ENCODE measurements at regions of chr2 and their contacts with region 1.

Region 1: GRCh38 chr2:158184556-158185343 is 83.1 kb downstream of the UPP2 start:
- DNase-seq: peak; percentile 86 to 87
- H3K4me3 ChIP-seq: no peak overlapping the region
- H3K4me3 Mint-ChIP-seq: no peak overlapping the region
- H3K27ac Mint-ChIP-seq: peak overlapping the region; percentile 31
- H3K4me1 ChIP-seq: peaks cover 38% of the 10 kb centered on the region
- H3K4me1 Mint-ChIP-seq: peaks cover 37% of the 10 kb centered on the region
- H3K27me3 ChIP-seq: no peaks in the 10 kb centered on the region
- H3K27me3 Mint-ChIP-seq: no peaks in the 10 kb centered on the region
- CTCF ChIP-seq: no peak

Region 2: GRCh38 chr2:158034199-158034866 is 150.4 kb before region 1 on chr2:
- CTCF ChIA-PET with region 1: no interaction called
- POLR2A ChIA-PET with region 1: no interaction called
- intact Hi-C with region 1: loop called (anchors 1 kb)
- DNase-seq: peak; percentile 69 to 75
- H3K4me3 ChIP-seq: no peak overlapping the region
- H3K4me3 Mint-ChIP-seq: no peak overlapping the region
- H3K27ac Mint-ChIP-seq: no peak overlapping the region
- H3K4me1 ChIP-seq: no peaks in the 10 kb centered on the region
- H3K4me1 Mint-ChIP-seq: peaks cover 9% of the 10 kb centered on the region
- H3K27me3 ChIP-seq: no peaks in the 10 kb centered on the region
- H3K27me3 Mint-ChIP-seq: peaks cover 7% of the 10 kb centered on the region
- CTCF ChIP-seq: peak; percentile 71 to 74

Region 3: DNA sequence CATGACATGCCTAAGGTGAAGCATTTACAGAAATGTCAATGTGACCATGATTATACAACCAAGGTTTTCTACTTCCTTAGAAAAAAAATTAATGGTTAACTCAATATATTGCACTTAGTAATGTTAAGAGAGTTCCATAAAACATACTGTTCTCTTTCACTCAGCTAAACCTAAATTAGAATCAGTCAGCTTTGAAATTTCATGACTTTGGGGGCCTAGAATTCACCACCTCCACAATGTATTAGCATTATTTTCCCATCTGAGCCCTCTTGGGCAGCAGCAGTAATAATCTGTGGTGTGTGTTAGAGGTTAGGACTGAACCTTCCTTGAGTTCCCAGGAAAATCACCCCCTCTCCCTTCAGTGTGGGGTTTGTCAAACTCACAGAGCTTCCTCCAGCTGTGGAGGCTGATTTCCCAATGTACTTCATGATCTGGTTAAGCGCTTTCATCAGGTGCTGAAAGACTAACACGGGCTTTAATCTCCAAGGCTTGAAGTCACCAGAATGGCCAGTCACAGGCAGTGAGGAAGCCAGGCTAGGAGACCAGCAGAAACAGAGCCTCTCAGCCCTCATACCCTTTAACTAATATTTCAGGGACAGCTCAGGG is 90.2 kb before region 1 on chr2:
- CTCF ChIA-PET with region 1: no interaction called
- POLR2A ChIA-PET with region 1: no interaction called
- intact Hi-C with region 1: loop called (anchors 1 kb)
- DNase-seq: peak in 1 of 2 experiments; percentile 12
- H3K4me3 ChIP-seq: no peak overlapping the region
- H3K4me3 Mint-ChIP-seq: no peak overlapping the region
- H3K27ac Mint-ChIP-seq: no peak overlapping the region
- H3K4me1 ChIP-seq: peaks cover 9% of the 10 kb centered on the region; the same call in 1 of the 2 replicates
- H3K4me1 Mint-ChIP-seq: no peaks in the 10 kb centered on the region
- H3K27me3 ChIP-seq: no peaks in the 10 kb centered on the region
- H3K27me3 Mint-ChIP-seq: no peaks in the 10 kb centered on the region
- CTCF ChIP-seq: no peak

Region 4: GRCh38 chr2:158130832-158131473 is 53.8 kb before region 1 on chr2:
- CTCF ChIA-PET with region 1: no interaction called
- POLR2A ChIA-PET with region 1: no interaction called
- intact Hi-C with region 1: loop called (anchors 1 kb)
- DNase-seq: peak; percentile 63 to 76
- H3K4me3 ChIP-seq: no peak overlapping the region
- H3K4me3 Mint-ChIP-seq: peak overlapping the region; percentile 57
- H3K27ac Mint-ChIP-seq: peak overlapping the region; percentile 85
- H3K4me1 ChIP-seq: peaks cover 72% of the 10 kb centered on the region
- H3K4me1 Mint-ChIP-seq: peaks cover 42% of the 10 kb centered on the region
- H3K27me3 ChIP-seq: no peaks in the 10 kb centered on the region
- H3K27me3 Mint-ChIP-seq: no peaks in the 10 kb centered on the region
- CTCF ChIP-seq: no peak

Region 5: GRCh38 chr2:158142568-158143332 is 42.0 kb before region 1 on chr2:
- CTCF ChIA-PET with region 1: no interaction called
- POLR2A ChIA-PET with region 1: no interaction called
- intact Hi-C with region 1: loop called (anchors 1 kb)
- DNase-seq: peak; percentile 40 to 71
- H3K4me3 ChIP-seq: no peak overlapping the region
- H3K4me3 Mint-ChIP-seq: no peak overlapping the region
- H3K27ac Mint-ChIP-seq: peak overlapping the region; percentile 66
- H3K4me1 ChIP-seq: peaks cover 31% of the 10 kb centered on the region
- H3K4me1 Mint-ChIP-seq: peaks cover 32% of the 10 kb centered on the region
- H3K27me3 ChIP-seq: no peaks in the 10 kb centered on the region
- H3K27me3 Mint-ChIP-seq: no peaks in the 10 kb centered on the region
- CTCF ChIP-seq: no peak

Region 6: GRCh38 chr2:158232476-158232875 is 47.7 kb after region 1 on chr2:
- CTCF ChIA-PET with region 1: no interaction called
- POLR2A ChIA-PET with region 1: no interaction called
- intact Hi-C with region 1: loop called (anchors 1 kb)
- DNase-seq: peak in 1 of 2 experiments; percentile 40
- H3K4me3 ChIP-seq: no peak overlapping the region
- H3K4me3 Mint-ChIP-seq: no peak overlapping the region
- H3K27ac Mint-ChIP-seq: no peak overlapping the region
- H3K4me1 ChIP-seq: peaks cover 11% of the 10 kb centered on the region
- H3K4me1 Mint-ChIP-seq: no peaks in the 10 kb centered on the region
- H3K27me3 ChIP-seq: no peaks in the 10 kb centered on the region; the same call in 1 of the 2 replicates
- H3K27me3 Mint-ChIP-seq: no peaks in the 10 kb centered on the region
- CTCF ChIP-seq: no peak

Measured in Caco-2 (cell line).